HepG2 (cell line): ENCODE measurements at regions of chr20 and their contacts with region 1.

Region 1: DNA sequence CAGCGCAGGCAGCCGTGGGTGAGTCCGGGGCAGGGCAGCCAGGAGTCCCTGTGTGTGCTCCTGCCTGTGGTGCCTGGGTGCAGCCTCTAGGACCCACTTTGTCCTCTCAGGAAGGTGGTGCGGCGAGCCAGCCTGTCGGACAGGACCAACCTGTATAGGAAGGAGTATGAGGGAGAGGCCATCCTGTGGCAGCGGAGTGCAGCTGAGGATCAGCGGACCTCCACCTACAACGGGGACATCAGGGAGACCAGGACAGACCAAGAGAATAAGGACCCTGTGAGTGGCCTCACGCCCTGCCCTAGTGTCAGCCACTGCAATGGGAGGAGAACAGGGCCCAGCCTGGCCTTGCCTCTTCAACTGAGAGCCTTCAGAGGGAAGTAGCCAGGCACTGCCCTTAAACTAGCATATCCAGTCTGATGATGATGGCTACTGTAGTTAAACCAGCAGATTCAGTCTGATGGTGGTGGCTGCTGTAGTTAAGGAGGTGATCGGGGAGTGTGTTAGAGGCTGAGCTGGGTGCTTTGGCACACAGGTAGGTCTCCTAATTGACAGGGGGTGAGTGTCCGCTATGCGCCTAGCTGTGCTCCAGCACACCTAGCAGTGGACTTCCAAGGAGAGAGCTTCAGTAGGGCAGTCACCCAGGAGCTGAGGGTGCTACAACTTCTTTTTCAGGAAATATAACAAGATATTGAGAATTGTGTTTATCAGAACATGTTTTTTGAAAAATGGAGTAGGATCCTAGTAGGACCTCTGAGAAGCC is 18.1 kb upstream of the FAM83D start:
- DNase-seq: no peak
- ATAC-seq: peak; percentile 76
- H3K4me3 ChIP-seq: no peak overlapping the region
- H3K27ac ChIP-seq: no peak overlapping the region
- H3K4me1 ChIP-seq: peaks cover 37% of the 10 kb centered on the region
- H3K27me3 ChIP-seq: no peaks in the 10 kb centered on the region; a peak in 1 of 5 replicates
- CTCF ChIP-seq: 0 out of 2 replicates have a peak, but pooled peaks have one; percentile 4
- EP300 ChIP-seq: no peak
- POLR2A ChIP-seq: no peak
- RAD21 ChIP-seq: no peak

Region 2: GRCh38 chr20:38825901-38826625 is 82.0 kb before region 1 on chr20:
- CTCF ChIA-PET with region 1: no interaction called
- POLR2A ChIA-PET with region 1: no interaction called
- in situ Hi-C with region 1: no loop called
- intact Hi-C with region 1: loop called (anchors 1 kb)
- DNase-seq: peak; percentile 85
- ATAC-seq: peak; percentile 91
- H3K4me3 ChIP-seq: no peak overlapping the region
- H3K27ac ChIP-seq: no peak overlapping the region
- H3K4me1 ChIP-seq: peaks cover 21% of the 10 kb centered on the region
- H3K27me3 ChIP-seq: 0 out of 5 replicates have a peak, but pooled peaks cover 1 to 3% of the 10 kb centered on the region in 2 experiments
- CTCF ChIP-seq: 0 out of 2 replicates have a peak, but pooled peaks have one; percentile 3
- EP300 ChIP-seq: peak in 1 of 2 experiments; percentile 54; a peak in 2 of 4 replicates
- POLR2A ChIP-seq: no peak
- RAD21 ChIP-seq: no peak

Region 3: GRCh38 chr20:38893565-38894090 is 14.5 kb before region 1 on chr20:
- CTCF ChIA-PET with region 1: interaction called, 3 read pairs
- POLR2A ChIA-PET with region 1: interaction called, 4 read pairs
- in situ Hi-C with region 1: no loop called
- intact Hi-C with region 1: loop called (anchors 1 kb)
- DNase-seq: peak; percentile 43
- ATAC-seq: peak; percentile 92
- H3K4me3 ChIP-seq: peak overlapping the region in 2 of 3 experiments; percentile 36 to 64; a peak in 3 of 6 replicates
- H3K27ac ChIP-seq: no peak overlapping the region
- H3K4me1 ChIP-seq: peaks cover 12% of the 10 kb centered on the region
- H3K27me3 ChIP-seq: peaks cover 8 to 18% of the 10 kb centered on the region in 2 experiments; a peak in 4 of 5 replicates
- CTCF ChIP-seq: peak; percentile 96
- EP300 ChIP-seq: no peak
- POLR2A ChIP-seq: no peak
- RAD21 ChIP-seq: peak; percentile 94

Region 4: DNA sequence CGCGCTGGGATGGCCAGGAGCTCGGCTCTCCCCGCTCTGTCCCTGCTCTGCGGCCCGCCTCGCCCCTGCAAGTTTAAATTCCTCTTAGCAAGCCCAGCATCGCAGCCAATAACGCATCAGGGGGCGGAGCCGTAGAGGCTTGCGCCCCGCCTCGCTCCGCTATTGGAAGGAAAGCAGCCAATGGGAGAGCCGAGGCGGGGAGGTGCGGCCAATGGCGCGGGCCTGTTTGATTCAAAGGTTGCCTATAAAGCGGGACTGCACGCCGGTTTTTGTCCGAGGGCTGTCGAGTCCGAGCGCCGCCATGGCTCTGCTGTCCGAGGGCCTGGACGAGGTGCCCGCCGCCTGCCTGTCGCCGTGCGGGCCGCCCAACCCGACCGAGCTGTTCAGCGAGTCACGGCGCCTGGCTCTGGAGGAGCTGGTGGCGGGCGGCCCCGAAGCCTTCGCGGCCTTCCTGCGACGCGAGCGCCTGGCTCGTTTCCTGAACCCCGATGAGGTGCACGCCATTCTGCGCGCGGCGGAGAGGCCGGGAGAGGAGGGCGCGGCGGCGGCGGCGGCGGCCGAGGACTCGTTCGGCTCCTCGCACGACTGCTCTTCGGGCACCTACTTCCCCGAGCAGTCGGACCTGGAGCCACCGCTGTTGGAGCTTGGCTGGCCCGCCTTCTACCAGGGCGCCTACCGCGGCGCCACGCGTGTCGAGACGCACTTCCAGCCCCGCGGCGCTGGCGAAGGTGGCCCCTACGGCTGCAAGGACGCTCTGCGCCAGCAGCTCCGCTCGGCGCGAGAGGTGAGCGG is 18.2 kb after region 1 on chr20 and contains the start of gene FAM83D:
- CTCF ChIA-PET with region 1: interaction called, 4 read pairs
- POLR2A ChIA-PET with region 1: interaction called, 18 read pairs
- in situ Hi-C with region 1: no loop called
- intact Hi-C with region 1: no loop called
- DNase-seq: peak; percentile 99
- ATAC-seq: peak; percentile 93
- H3K4me3 ChIP-seq: peak within 1 kb of the TSS; percentile 85 to 99 (median 95)
- H3K27ac ChIP-seq: peak within 1 kb of the TSS; percentile 73
- H3K4me1 ChIP-seq: peaks cover 57% of the 10 kb centered on the region
- H3K27me3 ChIP-seq: peaks cover 0 to 8% of the 10 kb centered on the region in 2 experiments; a peak in 2 of 5 replicates
- CTCF ChIP-seq: no peak
- EP300 ChIP-seq: peak in 1 of 2 experiments; percentile 40; a peak in 2 of 4 replicates
- POLR2A ChIP-seq: peak; percentile 100
- RAD21 ChIP-seq: peak; percentile 99
- total RNA-seq, gene FAM83D: 64.0 and 76.5 TPM in 2 replicates

Region 5: GRCh38 chr20:38941726-38942389 is 33.8 kb after region 1 on chr20:
- CTCF ChIA-PET with region 1: no interaction called
- POLR2A ChIA-PET with region 1: interaction called, 8 read pairs
- in situ Hi-C with region 1: no loop called
- intact Hi-C with region 1: loop called (anchors 1 kb)
- DNase-seq: peak; percentile 63
- ATAC-seq: peak; percentile 86
- H3K4me3 ChIP-seq: no peak overlapping the region
- H3K27ac ChIP-seq: peak overlapping the region; percentile 39
- H3K4me1 ChIP-seq: peaks cover 55% of the 10 kb centered on the region
- H3K27me3 ChIP-seq: no peaks in the 10 kb centered on the region
- CTCF ChIP-seq: peak; percentile 30; the same call in 1 of the 2 replicates
- EP300 ChIP-seq: no peak
- POLR2A ChIP-seq: peak in 1 of 2 experiments; percentile 22; a peak in 1 of 4 replicates
- RAD21 ChIP-seq: no peak

Region 6: DNA sequence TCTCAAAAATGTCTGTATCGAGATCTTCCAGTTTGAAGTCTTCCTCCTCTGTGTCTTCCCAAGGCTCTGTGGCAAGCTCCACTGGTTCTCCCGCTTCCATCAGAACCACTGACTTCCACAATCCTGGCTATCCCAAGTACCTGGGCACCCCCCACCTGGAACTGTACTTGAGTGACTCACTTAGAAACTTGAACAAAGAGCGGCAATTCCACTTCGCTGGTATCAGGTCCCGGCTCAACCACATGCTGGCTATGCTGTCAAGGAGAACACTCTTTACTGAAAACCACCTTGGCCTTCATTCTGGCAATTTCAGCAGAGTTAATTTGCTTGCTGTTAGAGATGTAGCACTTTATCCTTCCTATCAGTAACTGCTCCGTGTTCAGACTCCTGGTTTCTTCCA is 44.1 kb after region 1 on chr20:
- CTCF ChIA-PET with region 1: no interaction called
- POLR2A ChIA-PET with region 1: no interaction called
- in situ Hi-C with region 1: no loop called
- intact Hi-C with region 1: no loop called
- DNase-seq: no peak
- ATAC-seq: no peak
- H3K4me3 ChIP-seq: no peak overlapping the region
- H3K27ac ChIP-seq: no peak overlapping the region
- H3K4me1 ChIP-seq: peaks cover 38% of the 10 kb centered on the region
- H3K27me3 ChIP-seq: no peaks in the 10 kb centered on the region
- CTCF ChIP-seq: no peak
- EP300 ChIP-seq: no peak
- POLR2A ChIP-seq: no peak
- RAD21 ChIP-seq: no peak

Region 7: DNA sequence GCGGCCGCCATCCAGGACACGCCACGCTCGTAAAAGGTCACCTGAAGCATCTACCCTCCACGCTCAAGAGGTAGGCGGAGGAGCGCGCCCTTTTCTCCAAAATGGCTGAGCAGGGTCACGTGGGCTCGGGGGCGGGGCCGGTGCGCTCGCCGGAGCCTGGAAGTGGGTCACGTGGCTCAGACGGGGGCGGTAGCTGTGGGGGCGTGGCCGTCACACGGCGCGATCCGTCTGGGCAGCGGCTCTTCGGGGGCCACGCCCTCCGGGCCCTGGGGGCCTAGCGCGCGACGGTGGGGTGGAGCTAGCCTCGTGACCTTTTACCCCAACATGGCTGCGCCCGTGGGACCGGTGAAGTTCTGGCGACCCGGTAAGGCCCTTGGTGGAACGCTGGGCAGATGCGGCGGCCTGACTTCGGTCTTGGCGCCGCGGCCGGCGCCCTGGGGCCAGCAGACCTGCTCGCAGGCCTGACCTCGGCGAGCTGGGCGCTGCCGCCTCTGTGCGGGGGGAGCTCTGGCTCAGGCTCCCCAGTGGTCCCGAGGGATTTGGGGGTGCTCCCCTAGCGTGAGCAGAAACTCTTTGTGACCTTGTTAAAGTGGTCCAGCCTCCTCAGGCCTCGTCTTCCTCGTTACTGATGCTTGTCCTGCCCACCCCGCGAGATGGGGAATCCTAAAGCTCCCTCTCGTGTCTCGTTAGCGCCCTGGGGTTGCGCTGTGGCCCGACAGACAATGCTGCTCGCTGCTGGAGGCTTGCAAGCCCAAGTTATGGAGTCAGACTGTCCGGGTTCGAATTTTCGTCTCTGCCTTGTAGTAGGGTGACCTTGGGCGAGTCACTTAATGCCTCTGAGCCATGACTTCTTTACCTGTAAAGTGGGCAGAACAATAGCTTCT is 54.2 kb after region 1 on chr20 and contains the start of gene DHX35:
- CTCF ChIA-PET with region 1: no interaction called
- POLR2A ChIA-PET with region 1: interaction called, 15 read pairs
- in situ Hi-C with region 1: no loop called
- intact Hi-C with region 1: no loop called
- DNase-seq: peak; percentile 97
- ATAC-seq: peak; percentile 98
- H3K4me3 ChIP-seq: peak within 1 kb of the TSS; percentile 86 to 95 (median 95)
- H3K27ac ChIP-seq: peak within 1 kb of the TSS; percentile 89
- H3K4me1 ChIP-seq: peaks cover 34% of the 10 kb centered on the region
- H3K27me3 ChIP-seq: no peaks in the 10 kb centered on the region; a peak in 1 of 5 replicates
- CTCF ChIP-seq: peak; percentile 86
- EP300 ChIP-seq: peak in 1 of 2 experiments; percentile 14; a peak in 2 of 4 replicates
- POLR2A ChIP-seq: peak; percentile 79 to 96
- RAD21 ChIP-seq: peak; percentile 74
- total RNA-seq, gene DHX35: 28.7 and 30.4 TPM in 2 replicates